ENCODE measurements at regions of chr1 and their contacts with region 1.

Region 1: DNA sequence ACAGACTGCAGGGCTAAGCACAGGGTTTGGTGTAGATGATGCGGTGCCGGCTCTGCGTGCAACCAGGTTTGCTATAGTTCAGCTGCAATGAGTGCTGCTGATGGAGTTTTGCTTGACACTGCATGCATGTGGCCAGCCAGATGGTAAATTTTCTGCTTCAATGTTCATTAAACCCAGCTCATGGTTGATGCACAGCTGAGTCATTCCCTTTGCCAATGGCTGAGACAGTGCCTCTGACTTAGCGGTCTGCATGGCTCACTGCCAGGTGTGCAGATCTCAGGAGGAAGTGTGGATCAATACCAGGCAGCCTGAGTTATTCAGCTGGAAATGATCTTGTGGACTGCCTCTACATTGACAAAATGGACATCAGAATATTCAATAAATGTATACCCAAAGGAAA is 172.7 kb upstream of the ZP4 start:
- DNase-seq: peak; percentile 90
- H3K4me3 ChIP-seq: no peak overlapping the region
- H3K27ac ChIP-seq: peak overlapping the region; percentile 83
- H3K4me1 ChIP-seq: peaks cover 32% of the 10 kb centered on the region
- H3K27me3 ChIP-seq: no peaks in the 10 kb centered on the region
- CTCF ChIP-seq: no peak

Region 2: DNA sequence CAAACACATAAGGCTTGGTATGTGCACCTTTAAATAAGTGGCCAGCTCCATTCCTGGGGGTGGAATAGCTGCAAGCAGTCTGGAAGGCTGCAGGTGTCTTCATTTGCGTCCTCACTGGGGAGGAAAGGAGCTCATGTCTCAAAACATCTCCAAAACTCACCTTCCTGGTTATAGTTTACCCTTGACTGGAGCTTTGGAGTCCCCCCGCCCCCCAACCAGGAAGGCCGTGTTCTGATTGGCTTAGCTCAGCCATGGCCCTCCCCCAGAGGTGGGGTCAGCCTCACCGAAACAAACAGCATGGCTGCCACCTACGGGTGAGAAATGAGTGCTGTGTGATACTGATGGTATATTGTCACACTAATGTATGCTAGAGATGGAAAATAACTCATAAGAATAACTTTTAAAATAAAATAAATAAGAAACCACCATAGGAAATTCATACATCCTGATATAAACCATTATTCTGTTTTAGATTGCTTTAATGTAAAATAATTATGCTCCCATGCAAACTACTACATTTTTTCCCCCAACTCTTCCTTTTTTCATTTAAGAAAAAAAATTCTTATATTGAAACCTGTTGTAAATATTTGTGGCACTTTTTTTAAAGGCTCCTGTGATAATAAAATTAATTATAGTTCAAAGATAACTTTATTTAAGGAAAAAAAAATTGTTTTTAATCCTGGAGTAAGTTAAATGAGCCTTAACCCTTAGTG is 263.5 kb before region 1 on chr1:
- CTCF ChIA-PET with region 1: no interaction called
- dilution Hi-C with region 1: no loop called
- in situ Hi-C with region 1: no loop called
- intact Hi-C with region 1: no loop called
- DNase-seq: peak; percentile 77
- H3K4me3 ChIP-seq: no peak overlapping the region
- H3K27ac ChIP-seq: no peak overlapping the region
- H3K4me1 ChIP-seq: no peaks in the 10 kb centered on the region
- H3K27me3 ChIP-seq: no peaks in the 10 kb centered on the region
- CTCF ChIP-seq: peak; percentile 64 to 72

Region 3: DNA sequence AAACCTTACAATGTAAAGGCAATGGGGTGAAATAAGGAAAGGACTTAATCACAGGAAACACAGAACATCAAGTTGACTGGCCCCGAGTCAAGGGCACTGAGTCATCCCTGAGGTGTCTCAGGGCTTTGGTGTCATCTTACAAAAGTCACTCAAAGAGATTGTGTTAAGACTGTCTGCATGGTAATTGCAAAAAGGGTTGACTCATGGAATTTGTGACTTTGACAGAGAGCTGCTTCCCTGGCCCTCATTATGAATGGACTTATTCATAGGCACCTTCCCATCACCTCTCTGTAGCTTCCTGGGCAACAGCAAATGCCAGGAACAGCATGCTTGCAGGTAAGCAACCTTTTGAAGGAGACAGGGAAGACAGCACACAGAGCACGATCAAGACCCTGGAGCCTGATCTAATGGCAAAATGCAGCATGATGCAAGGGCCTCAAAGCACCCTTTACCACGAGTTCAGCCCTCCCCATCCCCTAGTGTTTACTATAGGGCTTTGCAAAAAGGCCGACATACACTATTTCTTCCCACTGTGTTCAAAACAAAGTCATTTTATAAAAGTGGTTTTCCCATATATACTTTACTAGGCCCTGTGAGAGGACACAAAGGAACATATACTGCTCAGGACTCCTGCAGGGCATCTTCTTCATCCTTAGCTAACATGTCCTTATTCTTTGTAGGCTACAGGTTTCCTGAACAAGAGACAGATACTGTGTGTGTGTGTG is 189.8 kb before region 1 on chr1:
- CTCF ChIA-PET with region 1: no interaction called
- dilution Hi-C with region 1: no loop called
- in situ Hi-C with region 1: loop called in 1 of 2 experiments (anchors 25 kb)
- intact Hi-C with region 1: loop called (anchors 5 kb)
- DNase-seq: peak; percentile 98
- H3K4me3 ChIP-seq: no peak overlapping the region
- H3K27ac ChIP-seq: peak overlapping the region; percentile 78
- H3K4me1 ChIP-seq: peaks cover 34% of the 10 kb centered on the region
- H3K27me3 ChIP-seq: no peaks in the 10 kb centered on the region
- CTCF ChIP-seq: no peak

Region 4: GRCh38 chr1:237879195-237879594 is 184.3 kb before region 1 on chr1:
- CTCF ChIA-PET with region 1: no interaction called
- dilution Hi-C with region 1: no loop called
- in situ Hi-C with region 1: loop called in 1 of 2 experiments (anchors 25 kb)
- intact Hi-C with region 1: loop called (anchors 5 kb)
- DNase-seq: peak; percentile 92
- H3K4me3 ChIP-seq: no peak overlapping the region
- H3K27ac ChIP-seq: peak overlapping the region; percentile 56
- H3K4me1 ChIP-seq: peaks cover 40% of the 10 kb centered on the region
- H3K27me3 ChIP-seq: no peaks in the 10 kb centered on the region
- CTCF ChIP-seq: no peak

Region 5: GRCh38 chr1:237888143-237888542 is 175.3 kb before region 1 on chr1:
- CTCF ChIA-PET with region 1: no interaction called
- dilution Hi-C with region 1: no loop called
- in situ Hi-C with region 1: loop called in 1 of 2 experiments (anchors 25 kb)
- intact Hi-C with region 1: loop called (anchors 5 kb)
- DNase-seq: peak; percentile 90
- H3K4me3 ChIP-seq: no peak overlapping the region
- H3K27ac ChIP-seq: peak overlapping the region; percentile 45
- H3K4me1 ChIP-seq: peaks cover 30% of the 10 kb centered on the region
- H3K27me3 ChIP-seq: no peaks in the 10 kb centered on the region
- CTCF ChIP-seq: no peak

Region 6: DNA sequence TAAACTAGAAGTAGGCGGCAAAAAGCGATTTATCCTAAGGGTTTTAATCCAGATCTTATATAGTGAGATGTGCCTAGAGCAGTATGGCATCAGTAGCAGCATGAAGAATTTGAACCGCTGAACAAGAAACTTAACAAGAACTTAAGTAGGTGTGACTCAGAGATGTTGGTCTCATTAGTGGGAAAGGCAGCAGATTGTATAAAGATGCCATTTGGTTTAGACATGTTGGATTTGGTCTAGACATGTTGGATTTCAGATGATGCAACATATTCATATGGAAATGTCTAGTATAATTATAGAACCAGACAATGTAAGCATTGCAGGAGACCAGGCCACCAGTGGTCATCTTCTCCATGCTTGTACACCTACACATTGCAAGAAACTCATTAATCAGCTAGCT is 130.6 kb before region 1 on chr1:
- CTCF ChIA-PET with region 1: no interaction called
- dilution Hi-C with region 1: no loop called
- in situ Hi-C with region 1: no loop called
- intact Hi-C with region 1: loop called (anchors 5 kb)
- DNase-seq: peak; percentile 95
- H3K4me3 ChIP-seq: no peak overlapping the region
- H3K27ac ChIP-seq: peak overlapping the region; percentile 14
- H3K4me1 ChIP-seq: peaks cover 17% of the 10 kb centered on the region
- H3K27me3 ChIP-seq: no peaks in the 10 kb centered on the region
- CTCF ChIP-seq: no peak

Region 7: GRCh38 chr1:238052496-238053266 is 10.8 kb before region 1 on chr1:
- CTCF ChIA-PET with region 1: no interaction called
- dilution Hi-C with region 1: no loop called
- in situ Hi-C with region 1: no loop called
- intact Hi-C with region 1: loop called (anchors 1 kb)
- DNase-seq: peak; percentile 68
- H3K4me3 ChIP-seq: no peak overlapping the region
- H3K27ac ChIP-seq: peak overlapping the region; percentile 80
- H3K4me1 ChIP-seq: peaks cover 19% of the 10 kb centered on the region
- H3K27me3 ChIP-seq: no peaks in the 10 kb centered on the region
- CTCF ChIP-seq: no peak

Region 8: GRCh38 chr1:238727670-238728069 is 664.2 kb after region 1 on chr1:
- CTCF ChIA-PET with region 1: no interaction called
- dilution Hi-C with region 1: no loop called
- in situ Hi-C with region 1: no loop called
- intact Hi-C with region 1: no loop called
- DNase-seq: no peak
- H3K4me3 ChIP-seq: no peak overlapping the region
- H3K27ac ChIP-seq: no peak overlapping the region
- H3K4me1 ChIP-seq: no peaks in the 10 kb centered on the region
- H3K27me3 ChIP-seq: no peaks in the 10 kb centered on the region
- CTCF ChIP-seq: no peak

Measured in mammary epithelial cell (primary cell).